ENCODE measurements at regions of chr12 and their contacts with region 1.

Region 1: GRCh38 chr12:6533923-6534694 is at the start of gene GAPDH:
- DNase-seq: peak; percentile 77
- H3K4me3 ChIP-seq: peak within 1 kb of the TSS; percentile 88
- H3K27me3 ChIP-seq: no peaks in the 10 kb centered on the region
- CTCF ChIP-seq: no peak
- polyA plus RNA-seq, gene GAPDH: 12,114 and 18,709 TPM in 2 replicates

Region 2: GRCh38 chr12:6295094-6295811 is 238.9 kb before region 1 on chr12:
- CTCF ChIA-PET with region 1: no interaction called
- POLR2A ChIA-PET with region 1: no interaction called
- DNase-seq: peak; percentile 85
- H3K4me3 ChIP-seq: no peak overlapping the region
- H3K27me3 ChIP-seq: no peaks in the 10 kb centered on the region
- CTCF ChIP-seq: no peak

Region 3: GRCh38 chr12:6374028-6374785 is 159.9 kb before region 1 on chr12:
- CTCF ChIA-PET with region 1: no interaction called
- POLR2A ChIA-PET with region 1: interaction called, 15 read pairs
- DNase-seq: no peak
- H3K4me3 ChIP-seq: no peak overlapping the region
- H3K27me3 ChIP-seq: no peaks in the 10 kb centered on the region
- CTCF ChIP-seq: no peak

Region 4: GRCh38 chr12:6548966-6549683 is 15.0 kb after region 1 on chr12:
- CTCF ChIA-PET with region 1: interaction called, 157 read pairs
- POLR2A ChIA-PET with region 1: interaction called, 24 read pairs
- DNase-seq: no peak
- H3K4me3 ChIP-seq: no peak overlapping the region
- H3K27me3 ChIP-seq: no peaks in the 10 kb centered on the region
- CTCF ChIP-seq: no peak

Region 5: GRCh38 chr12:6613776-6614512 is 79.8 kb after region 1 on chr12:
- CTCF ChIA-PET with region 1: interaction called, 3 read pairs
- POLR2A ChIA-PET with region 1: interaction called, 13 read pairs
- DNase-seq: peak; percentile 87
- H3K4me3 ChIP-seq: no peak overlapping the region
- H3K27me3 ChIP-seq: no peaks in the 10 kb centered on the region
- CTCF ChIP-seq: peak; percentile 22; the same call in 1 of the 2 replicates